Activated CD8-positive, alpha-beta T cell treated with anti-CD3 and anti-CD28 coated beads for 36 hours (primary cell): ENCODE measurements at regions of chr7 and their contacts with region 1.

Region 1: DNA sequence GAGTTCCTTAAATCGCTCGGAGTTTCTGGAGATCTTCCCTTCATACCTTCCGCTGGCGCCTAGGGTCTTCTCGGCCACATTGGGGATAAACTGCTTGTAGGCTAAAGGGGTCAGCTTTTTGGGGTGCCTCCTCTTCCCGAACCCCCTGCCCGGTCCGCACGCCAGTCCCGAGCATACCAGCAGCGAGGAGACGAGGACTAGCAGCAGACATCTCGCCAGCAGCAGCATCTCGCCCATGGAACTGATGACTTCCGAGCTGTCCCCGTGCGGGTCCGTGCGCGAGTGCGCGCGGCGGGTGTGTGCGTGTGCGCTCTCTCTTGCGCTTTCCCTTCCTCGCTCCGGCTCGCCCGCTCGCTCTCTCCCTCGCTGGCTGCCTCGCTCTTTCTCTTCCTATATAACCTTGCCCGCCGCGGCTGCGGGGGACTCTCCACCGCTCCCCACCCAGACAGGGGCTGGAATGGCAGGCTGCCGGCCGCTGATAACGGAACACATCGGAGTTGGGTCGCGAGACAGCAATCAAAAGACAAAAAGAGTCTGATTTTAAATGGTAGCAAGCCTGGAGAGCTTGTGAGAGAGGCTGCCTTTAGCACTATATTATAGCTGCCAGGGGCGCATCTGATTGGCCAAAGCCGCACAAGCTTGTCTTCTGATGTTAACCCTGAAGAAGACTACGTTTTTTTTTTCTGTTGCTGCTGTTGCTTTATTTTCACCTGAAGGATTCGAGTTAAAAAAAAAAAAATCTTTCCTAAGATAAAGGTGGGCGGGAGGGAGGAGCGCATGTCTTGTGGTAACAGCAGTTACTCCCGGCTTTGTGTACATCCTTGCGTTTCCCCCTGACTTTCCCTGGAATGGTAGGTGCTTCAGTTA is at the start of gene SHH:
- DNase-seq: no peak
- ATAC-seq: no peak
- H3K4me3 Mint-ChIP-seq: no peak within 1 kb of the TSS
- H3K27ac Mint-ChIP-seq: no peak within 1 kb of the TSS
- H3K4me1 Mint-ChIP-seq: peaks cover 21% of the 10 kb centered on the region
- H3K27me3 Mint-ChIP-seq: peaks cover 61% of the 10 kb centered on the region
- CTCF ChIP-seq: no peak
- total RNA-seq, gene SHH: not detected

Region 2: GRCh38 chr7:155752756-155753445 is 59.2 kb before region 1 on chr7:
- CTCF ChIA-PET with region 1: no interaction called
- POLR2A ChIA-PET with region 1: no interaction called
- intact Hi-C with region 1: no loop called
- DNase-seq: no peak
- ATAC-seq: peak; percentile 15
- H3K4me3 Mint-ChIP-seq: no peak overlapping the region
- H3K27ac Mint-ChIP-seq: peak overlapping the region; percentile 74
- H3K4me1 Mint-ChIP-seq: peaks cover 82% of the 10 kb centered on the region
- H3K27me3 Mint-ChIP-seq: no peaks in the 10 kb centered on the region
- CTCF ChIP-seq: no peak

Region 3: DNA sequence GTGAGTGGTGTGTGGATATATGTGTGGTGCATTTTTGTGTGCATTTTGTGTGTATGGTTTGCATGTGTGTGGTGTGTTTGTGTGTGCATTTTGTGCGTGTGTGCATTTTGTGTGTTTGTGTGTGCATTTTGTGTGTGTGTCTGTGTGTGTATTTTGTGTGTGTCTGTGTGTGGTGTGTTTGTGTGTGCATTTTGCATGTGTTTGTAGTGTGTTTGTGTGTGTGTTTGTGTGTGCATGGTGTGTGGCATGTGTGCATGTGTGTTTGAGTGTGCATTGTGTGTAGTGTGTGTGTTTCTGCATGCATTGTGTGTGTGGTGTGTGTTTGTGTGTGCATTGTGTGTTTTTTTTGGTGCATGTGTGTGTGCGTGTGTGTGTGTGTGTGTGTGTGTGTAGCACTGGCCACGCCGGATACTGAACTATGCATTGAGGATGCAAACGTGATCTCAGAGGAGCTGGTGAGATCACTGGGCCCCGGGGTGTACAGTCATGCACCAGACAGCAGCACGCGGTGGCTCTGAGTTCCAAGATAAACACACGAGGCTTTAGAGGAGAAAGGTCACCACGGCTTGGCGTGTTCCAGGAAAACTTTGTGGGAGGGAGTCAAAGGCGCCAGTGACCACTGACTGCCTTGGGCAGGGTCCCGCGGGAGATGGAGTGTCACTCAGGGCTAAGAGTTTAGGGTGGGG is 106.7 kb after region 1 on chr7:
- CTCF ChIA-PET with region 1: no interaction called
- POLR2A ChIA-PET with region 1: no interaction called
- intact Hi-C with region 1: no loop called
- DNase-seq: no peak
- ATAC-seq: no peak
- H3K4me3 Mint-ChIP-seq: no peak overlapping the region
- H3K27ac Mint-ChIP-seq: no peak overlapping the region
- H3K4me1 Mint-ChIP-seq: no peaks in the 10 kb centered on the region
- H3K27me3 Mint-ChIP-seq: no peaks in the 10 kb centered on the region
- CTCF ChIP-seq: no peak

Region 4: DNA sequence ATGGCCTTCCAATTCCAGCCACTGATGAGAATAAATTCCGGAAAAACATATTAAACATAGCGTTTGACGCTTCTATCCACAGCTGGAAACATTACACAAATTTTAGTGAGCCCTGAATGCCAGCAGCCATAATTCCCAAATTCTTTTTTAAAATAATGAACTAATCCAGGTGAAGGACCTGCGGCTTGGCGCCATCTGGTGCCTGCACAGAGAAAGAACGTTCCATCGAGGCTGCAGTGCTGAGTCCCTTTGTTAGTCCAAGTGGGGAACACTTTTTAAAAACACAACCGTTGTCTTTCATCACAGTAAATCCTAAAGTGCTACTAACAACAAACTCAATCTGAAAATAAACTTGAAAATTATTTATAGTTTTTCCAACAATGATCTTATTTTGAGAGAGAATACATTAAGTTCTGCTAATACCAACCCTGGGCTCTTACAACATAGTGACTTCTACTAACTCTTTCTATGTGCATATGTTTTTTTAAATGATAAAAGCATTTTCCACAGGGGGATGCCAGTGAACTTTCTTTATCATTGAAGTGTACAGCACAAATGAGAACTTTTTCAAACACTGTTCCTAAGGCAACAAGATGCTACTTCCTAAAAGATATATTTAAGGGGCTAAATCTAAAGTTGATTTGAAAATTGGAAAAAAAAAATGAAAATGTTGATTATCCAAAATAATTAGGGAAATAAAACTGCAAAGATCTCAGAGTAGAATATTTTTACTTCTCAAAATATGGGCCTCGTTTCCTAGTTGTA is 661.5 kb after region 1 on chr7:
- CTCF ChIA-PET with region 1: interaction called, 4 read pairs
- POLR2A ChIA-PET with region 1: no interaction called
- intact Hi-C with region 1: loop called (anchors 5 kb)
- DNase-seq: peak; percentile 51
- ATAC-seq: peak; percentile 55
- H3K4me3 Mint-ChIP-seq: no peak overlapping the region
- H3K27ac Mint-ChIP-seq: no peak overlapping the region
- H3K4me1 Mint-ChIP-seq: no peaks in the 10 kb centered on the region
- H3K27me3 Mint-ChIP-seq: peaks cover 21% of the 10 kb centered on the region
- CTCF ChIP-seq: peak; percentile 80